ENCODE measurements at regions of chr16 and their contacts with region 1.

Region 1: DNA sequence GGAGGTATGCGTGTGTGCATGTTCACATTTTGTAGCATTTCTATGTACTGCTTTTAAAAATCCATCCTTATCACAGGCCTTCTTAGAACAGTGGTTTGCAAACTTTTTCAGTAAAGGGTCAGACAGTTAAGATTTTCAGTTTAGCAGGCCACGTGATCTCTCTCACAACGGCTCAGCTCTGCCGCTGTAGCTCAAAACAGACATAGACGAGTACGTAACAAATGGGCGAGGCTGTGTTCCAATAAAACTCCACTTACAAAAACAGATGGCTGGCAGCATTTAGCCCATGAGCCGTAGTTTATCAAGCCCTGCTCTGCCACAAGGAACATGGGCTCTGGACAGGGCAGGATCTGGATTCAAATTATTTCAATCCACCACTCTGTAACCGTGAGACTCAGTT is 141.8 kb downstream of the XYLT1 start:
- DNase-seq: no peak
- H3K4me3 ChIP-seq: no peak overlapping the region
- H3K27ac ChIP-seq: no peak overlapping the region
- H3K4me1 ChIP-seq: no peaks in the 10 kb centered on the region
- H3K27me3 ChIP-seq: no peaks in the 10 kb centered on the region
- CTCF ChIP-seq: no peak

Region 2: DNA sequence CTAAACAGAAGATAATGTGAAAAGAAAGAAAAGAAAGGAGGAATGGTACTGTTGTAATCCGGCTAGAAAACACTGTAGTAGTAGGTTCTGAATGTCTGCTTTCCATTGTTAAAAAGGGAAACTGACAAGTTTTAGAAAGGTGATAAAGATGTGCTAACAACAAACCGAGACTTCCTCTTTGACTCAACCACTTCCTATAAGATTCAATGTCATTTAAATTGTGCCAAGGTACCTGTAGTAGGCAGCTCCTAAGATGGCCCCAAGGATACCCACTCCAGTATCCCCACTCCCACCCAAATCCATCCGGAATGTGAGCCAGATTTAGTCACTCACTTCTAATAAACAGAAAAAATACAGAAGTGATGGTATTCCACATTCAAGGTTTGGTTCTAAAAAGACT is 110.6 kb after region 1 on chr16:
- CTCF ChIA-PET with region 1: interaction called, 11 read pairs
- POLR2A ChIA-PET with region 1: no interaction called
- intact Hi-C with region 1: no loop called
- DNase-seq: no peak
- H3K4me3 ChIP-seq: no peak overlapping the region
- H3K27ac ChIP-seq: no peak overlapping the region
- H3K4me1 ChIP-seq: no peaks in the 10 kb centered on the region
- H3K27me3 ChIP-seq: no peaks in the 10 kb centered on the region
- CTCF ChIP-seq: no peak

Region 3: GRCh38 chr16:17850574-17851250 is 521.8 kb after region 1 on chr16:
- CTCF ChIA-PET with region 1: no interaction called
- POLR2A ChIA-PET with region 1: no interaction called
- intact Hi-C with region 1: no loop called
- DNase-seq: peak; percentile 6
- H3K4me3 ChIP-seq: no peak overlapping the region
- H3K27ac ChIP-seq: no peak overlapping the region
- H3K4me1 ChIP-seq: no peaks in the 10 kb centered on the region
- H3K27me3 ChIP-seq: no peaks in the 10 kb centered on the region
- CTCF ChIP-seq: no peak